ENCODE measurements at regions of chr19 and their contacts with region 1.

Region 1: GRCh38 chr19:35090506-35091237 is 25.0 kb upstream of the FXYD3 start:
- DNase-seq: no peak
- ATAC-seq: peak; percentile 87

Region 2: DNA sequence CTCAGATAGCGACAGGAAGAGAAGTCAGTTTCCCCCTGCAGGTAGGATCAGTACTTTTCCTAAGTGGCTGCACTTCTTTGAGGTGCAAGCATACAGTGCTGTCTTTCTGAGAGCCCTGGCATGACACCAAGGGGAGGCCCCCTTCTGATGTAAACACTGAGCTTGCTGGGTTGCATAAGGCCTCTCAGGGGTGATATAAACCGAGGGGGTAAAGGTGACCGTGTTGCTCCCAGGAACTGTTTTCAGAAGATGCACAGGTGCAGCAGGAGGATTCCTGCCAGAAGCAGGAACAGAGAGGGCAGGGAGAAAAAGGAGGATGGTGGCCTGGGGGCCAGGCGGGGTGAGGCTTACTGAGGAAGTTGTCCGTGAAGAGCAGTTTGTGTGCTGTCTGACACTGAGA is 238.0 kb before region 1 on chr19:
- intact Hi-C with region 1: no loop called
- DNase-seq: no peak
- ATAC-seq: no peak

Region 3: DNA sequence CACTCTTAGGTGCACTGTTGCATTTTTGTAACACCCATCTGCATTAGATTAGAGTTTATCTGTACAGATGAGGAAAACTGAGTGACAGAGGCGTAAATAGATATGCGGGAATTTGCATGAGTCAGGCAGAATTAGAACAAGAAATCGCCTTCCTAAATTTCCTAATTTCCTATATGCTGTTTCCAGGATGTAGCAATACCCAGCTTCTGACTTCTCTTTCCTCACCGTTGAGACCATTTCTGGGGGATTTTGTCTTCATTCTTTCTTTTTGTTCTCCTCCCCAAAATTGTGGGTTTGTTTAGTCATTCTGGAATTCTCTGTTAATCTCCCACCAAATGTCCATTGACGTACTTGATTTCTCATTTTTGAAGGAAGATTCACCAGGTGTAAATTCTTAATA is 116.0 kb before region 1 on chr19:
- intact Hi-C with region 1: loop called (anchors 1 kb)
- DNase-seq: no peak
- ATAC-seq: no peak

Region 4: DNA sequence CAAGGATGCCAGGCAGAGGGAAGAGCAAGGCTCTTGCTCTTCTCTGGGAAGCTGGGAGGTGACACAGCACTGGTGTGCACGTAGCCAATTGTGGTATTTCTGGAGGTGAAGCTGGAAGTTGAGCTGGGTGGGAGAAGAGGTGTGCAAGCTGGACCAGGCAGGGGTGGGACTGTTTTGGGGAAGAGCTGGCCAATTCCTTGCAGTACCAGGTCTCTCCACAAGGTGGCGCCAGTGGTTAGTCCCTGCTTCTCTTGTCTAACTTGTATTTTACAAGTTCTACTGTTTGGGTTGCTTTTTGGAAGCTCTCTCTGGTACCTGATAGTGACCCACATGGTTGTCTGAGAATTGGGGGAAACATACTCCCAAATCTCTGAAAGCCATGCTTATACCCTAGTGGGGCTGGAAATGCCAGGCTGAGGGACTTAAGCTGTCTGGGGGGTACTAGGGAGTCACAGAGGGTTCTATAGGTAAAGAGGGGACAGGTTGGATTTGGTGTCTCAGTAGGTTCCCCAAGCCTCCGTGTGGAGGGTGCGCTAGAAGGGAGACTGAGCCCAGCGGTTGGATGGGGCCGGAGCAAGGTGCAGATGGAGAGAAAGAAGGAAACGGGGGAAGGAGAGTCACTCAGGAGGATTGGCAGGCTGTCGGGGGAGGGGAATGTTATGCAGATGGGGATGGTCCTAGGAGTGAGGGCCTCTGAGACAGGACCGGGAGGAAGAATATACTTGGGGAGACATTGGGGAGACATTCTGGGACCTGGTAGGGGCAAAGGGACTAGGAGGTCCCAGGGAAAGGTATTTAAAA is 46.2 kb before region 1 on chr19:
- intact Hi-C with region 1: loop called (anchors 1 kb)
- DNase-seq: no peak
- ATAC-seq: no peak

Region 5: GRCh38 chr19:35404879-35405622 is 314.4 kb after region 1 on chr19:
- intact Hi-C with region 1: no loop called
- DNase-seq: no peak
- ATAC-seq: no peak